ENCODE measurements at regions of chr2 and their contacts with region 1.

Region 1: DNA sequence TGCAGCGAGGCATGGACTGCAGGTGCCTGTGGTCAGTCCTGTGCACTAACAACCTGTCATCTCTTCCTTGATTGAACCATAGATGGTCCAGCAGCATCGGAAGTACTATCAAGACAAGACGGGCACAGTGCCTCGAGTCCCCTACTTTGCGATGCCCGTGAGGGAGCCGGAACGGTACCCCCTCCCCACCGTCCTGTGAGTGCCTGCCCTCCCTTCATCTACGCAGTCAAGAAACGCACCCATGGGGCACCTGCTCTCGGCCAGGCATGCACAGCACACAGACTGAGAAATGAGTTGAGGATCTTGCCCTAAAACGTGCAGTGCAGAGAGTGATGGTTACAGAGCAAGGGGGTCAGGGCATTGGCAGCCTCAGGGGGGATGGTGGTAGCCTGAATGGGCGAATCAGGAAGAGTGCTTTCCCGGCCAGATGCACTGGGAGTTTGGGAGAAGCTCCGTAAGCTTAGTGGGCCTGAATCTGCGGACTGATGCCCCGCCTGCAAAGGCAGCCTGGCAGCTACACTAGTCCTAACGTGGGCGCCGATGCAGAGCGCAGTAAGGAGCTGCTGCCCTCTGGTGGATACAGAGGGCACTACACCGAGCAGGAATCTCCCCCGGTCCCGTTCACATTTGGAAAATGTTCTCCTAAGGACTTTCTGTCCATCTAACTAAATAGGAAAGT is 63.6 kb downstream of the CIB4 start:
- DNase-seq: peak; percentile 32 to 76 (median 63)
- ATAC-seq: peak; percentile 92
- H3K4me3 ChIP-seq: no peak overlapping the region
- H3K4me3 Mint-ChIP-seq: no peak overlapping the region
- H3K27ac ChIP-seq: no peak overlapping the region
- H3K27ac Mint-ChIP-seq: no peak overlapping the region
- H3K4me1 ChIP-seq: no peaks in the 10 kb centered on the region
- H3K4me1 Mint-ChIP-seq: no peaks in the 10 kb centered on the region
- H3K27me3 ChIP-seq: no peaks in the 10 kb centered on the region
- H3K27me3 Mint-ChIP-seq: peaks cover 17% of the 10 kb centered on the region
- CTCF ChIP-seq: peak; percentile 95

Region 2: GRCh38 chr2:25602333-25602723 is 975.2 kb before region 1 on chr2:
- CTCF ChIA-PET with region 1: no interaction called
- POLR2A ChIA-PET with region 1: no interaction called
- intact Hi-C with region 1: no loop called
- DNase-seq: no peak
- ATAC-seq: no peak
- H3K4me3 ChIP-seq: no peak overlapping the region
- H3K4me3 Mint-ChIP-seq: no peak overlapping the region
- H3K27ac ChIP-seq: no peak overlapping the region
- H3K27ac Mint-ChIP-seq: no peak overlapping the region
- H3K4me1 ChIP-seq: no peaks in the 10 kb centered on the region
- H3K4me1 Mint-ChIP-seq: peaks cover 2% of the 10 kb centered on the region
- H3K27me3 ChIP-seq: no peaks in the 10 kb centered on the region
- H3K27me3 Mint-ChIP-seq: no peaks in the 10 kb centered on the region
- CTCF ChIP-seq: no peak

Region 3: DNA sequence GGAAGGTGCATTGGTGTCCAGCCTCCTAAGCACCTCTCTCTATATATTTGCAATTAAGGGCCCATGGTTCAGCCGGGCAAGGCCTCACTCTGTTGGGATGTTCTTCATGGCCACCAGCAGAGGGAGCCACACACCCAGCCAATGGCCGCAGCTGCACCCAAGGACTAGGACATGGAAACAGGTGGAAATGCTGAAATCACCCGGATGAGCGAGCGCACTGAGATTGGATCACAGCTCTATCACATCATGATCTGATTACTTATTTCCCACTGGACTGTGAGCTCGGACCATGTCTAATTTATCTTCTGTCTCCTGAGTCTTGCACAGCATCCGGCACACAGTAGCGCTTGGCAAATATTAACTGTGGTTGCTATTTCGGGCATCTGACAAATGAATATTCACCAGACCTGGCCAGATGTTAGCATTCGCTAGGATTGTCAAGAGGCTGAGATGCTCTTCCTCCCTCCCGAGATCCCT is 626.5 kb before region 1 on chr2:
- CTCF ChIA-PET with region 1: interaction called, 16 read pairs
- POLR2A ChIA-PET with region 1: no interaction called
- intact Hi-C with region 1: loop called in 1 of 2 experiments (anchors 1 kb)
- DNase-seq: peak; percentile 42 to 84 (median 67)
- ATAC-seq: peak; percentile 96
- H3K4me3 ChIP-seq: no peak overlapping the region
- H3K4me3 Mint-ChIP-seq: no peak overlapping the region
- H3K27ac ChIP-seq: no peak overlapping the region
- H3K27ac Mint-ChIP-seq: no peak overlapping the region
- H3K4me1 ChIP-seq: no peaks in the 10 kb centered on the region
- H3K4me1 Mint-ChIP-seq: peaks cover 2% of the 10 kb centered on the region
- H3K27me3 ChIP-seq: no peaks in the 10 kb centered on the region
- H3K27me3 Mint-ChIP-seq: no peaks in the 10 kb centered on the region
- CTCF ChIP-seq: peak; percentile 89

Region 4: DNA sequence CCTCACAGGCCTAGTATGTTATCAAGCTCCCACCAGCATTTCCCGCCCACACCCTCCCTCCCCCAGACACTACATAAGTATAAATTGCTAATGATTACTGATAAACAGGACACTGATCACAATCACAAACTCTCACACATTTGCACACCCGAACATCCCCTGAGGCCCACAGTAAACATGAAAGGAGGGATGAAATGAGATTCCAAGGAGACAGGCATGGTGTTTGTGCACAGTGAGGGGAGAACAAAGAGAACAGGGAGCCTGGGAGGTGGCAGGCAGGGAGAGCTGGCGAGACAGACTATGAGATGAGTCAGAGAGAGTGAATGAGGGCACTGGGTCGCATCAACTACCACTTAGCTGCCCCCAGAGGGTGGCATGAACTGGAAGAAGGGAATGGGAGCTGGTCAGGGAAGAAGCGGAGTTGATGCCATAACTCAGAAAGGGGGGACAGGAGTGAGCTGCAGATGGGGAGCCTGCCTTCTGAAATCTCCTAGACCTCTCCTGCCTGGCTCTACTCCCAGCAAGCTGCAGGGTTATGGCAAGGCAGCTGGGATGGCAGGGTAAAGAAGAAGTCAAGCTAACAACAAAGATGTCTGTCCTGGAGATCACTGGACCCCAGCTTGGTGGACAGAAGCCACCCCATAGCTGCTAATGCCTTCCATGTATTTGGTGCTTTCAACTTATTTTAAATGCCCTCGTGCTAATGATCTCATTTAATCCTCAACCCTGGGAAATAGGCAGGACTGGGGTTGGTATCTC is 600.4 kb before region 1 on chr2:
- CTCF ChIA-PET with region 1: no interaction called
- POLR2A ChIA-PET with region 1: no interaction called
- intact Hi-C with region 1: no loop called
- DNase-seq: no peak
- ATAC-seq: no peak
- H3K4me3 ChIP-seq: no peak overlapping the region
- H3K4me3 Mint-ChIP-seq: no peak overlapping the region
- H3K27ac ChIP-seq: no peak overlapping the region
- H3K27ac Mint-ChIP-seq: no peak overlapping the region
- H3K4me1 ChIP-seq: peaks cover 7% of the 10 kb centered on the region
- H3K4me1 Mint-ChIP-seq: peaks cover 20% of the 10 kb centered on the region
- H3K27me3 ChIP-seq: no peaks in the 10 kb centered on the region
- H3K27me3 Mint-ChIP-seq: no peaks in the 10 kb centered on the region
- CTCF ChIP-seq: no peak

Region 5: GRCh38 chr2:26088032-26088643 is 489.4 kb before region 1 on chr2:
- CTCF ChIA-PET with region 1: no interaction called
- POLR2A ChIA-PET with region 1: no interaction called
- intact Hi-C with region 1: loop called in 1 of 2 experiments (anchors 5 kb)
- DNase-seq: peak in 4 of 9 experiments; percentile 9 to 61 (median 32)
- ATAC-seq: peak; percentile 69
- H3K4me3 ChIP-seq: no peak overlapping the region
- H3K4me3 Mint-ChIP-seq: no peak overlapping the region
- H3K27ac ChIP-seq: no peak overlapping the region
- H3K27ac Mint-ChIP-seq: no peak overlapping the region
- H3K4me1 ChIP-seq: peaks cover 4% of the 10 kb centered on the region
- H3K4me1 Mint-ChIP-seq: peaks cover 61% of the 10 kb centered on the region
- H3K27me3 ChIP-seq: no peaks in the 10 kb centered on the region
- H3K27me3 Mint-ChIP-seq: no peaks in the 10 kb centered on the region
- CTCF ChIP-seq: peak; percentile 69

Region 6: DNA sequence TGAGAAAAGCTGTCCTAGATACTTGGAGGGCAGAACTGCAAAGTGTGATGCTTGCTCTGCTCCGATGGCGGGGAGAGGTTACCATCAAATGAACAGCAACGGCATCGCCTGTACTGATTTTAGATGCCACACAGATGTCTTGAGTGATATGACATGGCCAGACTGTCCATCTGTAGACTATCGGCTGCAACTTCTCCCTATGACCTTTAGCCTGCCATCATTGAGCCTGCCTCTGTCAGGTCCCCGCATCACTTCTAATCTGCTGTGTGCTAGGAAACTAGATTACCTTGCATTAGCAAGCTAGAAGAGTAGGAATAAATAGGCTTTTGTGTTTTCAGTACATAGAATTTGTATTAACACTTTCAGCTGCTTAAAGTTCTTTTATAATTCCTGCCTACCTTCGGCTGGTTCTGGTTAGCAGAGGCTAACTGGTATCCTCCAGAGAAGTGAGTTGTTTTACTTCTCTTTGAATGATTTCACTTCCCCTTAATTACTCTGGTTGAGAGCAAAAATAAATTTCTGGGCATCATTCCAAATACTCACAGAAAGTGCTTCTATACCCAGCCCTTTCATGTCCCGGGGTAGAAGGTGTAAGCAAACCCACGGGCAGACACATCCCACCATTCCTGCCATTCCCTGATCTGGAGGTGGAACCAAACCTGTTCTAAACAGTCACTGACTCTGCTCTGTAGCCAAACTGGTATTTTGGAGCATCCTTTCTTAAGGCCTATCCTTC is 380.7 kb before region 1 on chr2:
- CTCF ChIA-PET with region 1: no interaction called
- POLR2A ChIA-PET with region 1: no interaction called
- intact Hi-C with region 1: no loop called
- DNase-seq: no peak
- ATAC-seq: no peak
- H3K4me3 ChIP-seq: no peak overlapping the region
- H3K4me3 Mint-ChIP-seq: no peak overlapping the region
- H3K27ac ChIP-seq: no peak overlapping the region
- H3K27ac Mint-ChIP-seq: no peak overlapping the region
- H3K4me1 ChIP-seq: no peaks in the 10 kb centered on the region
- H3K4me1 Mint-ChIP-seq: no peaks in the 10 kb centered on the region
- H3K27me3 ChIP-seq: no peaks in the 10 kb centered on the region
- H3K27me3 Mint-ChIP-seq: no peaks in the 10 kb centered on the region
- CTCF ChIP-seq: no peak

Region 7: DNA sequence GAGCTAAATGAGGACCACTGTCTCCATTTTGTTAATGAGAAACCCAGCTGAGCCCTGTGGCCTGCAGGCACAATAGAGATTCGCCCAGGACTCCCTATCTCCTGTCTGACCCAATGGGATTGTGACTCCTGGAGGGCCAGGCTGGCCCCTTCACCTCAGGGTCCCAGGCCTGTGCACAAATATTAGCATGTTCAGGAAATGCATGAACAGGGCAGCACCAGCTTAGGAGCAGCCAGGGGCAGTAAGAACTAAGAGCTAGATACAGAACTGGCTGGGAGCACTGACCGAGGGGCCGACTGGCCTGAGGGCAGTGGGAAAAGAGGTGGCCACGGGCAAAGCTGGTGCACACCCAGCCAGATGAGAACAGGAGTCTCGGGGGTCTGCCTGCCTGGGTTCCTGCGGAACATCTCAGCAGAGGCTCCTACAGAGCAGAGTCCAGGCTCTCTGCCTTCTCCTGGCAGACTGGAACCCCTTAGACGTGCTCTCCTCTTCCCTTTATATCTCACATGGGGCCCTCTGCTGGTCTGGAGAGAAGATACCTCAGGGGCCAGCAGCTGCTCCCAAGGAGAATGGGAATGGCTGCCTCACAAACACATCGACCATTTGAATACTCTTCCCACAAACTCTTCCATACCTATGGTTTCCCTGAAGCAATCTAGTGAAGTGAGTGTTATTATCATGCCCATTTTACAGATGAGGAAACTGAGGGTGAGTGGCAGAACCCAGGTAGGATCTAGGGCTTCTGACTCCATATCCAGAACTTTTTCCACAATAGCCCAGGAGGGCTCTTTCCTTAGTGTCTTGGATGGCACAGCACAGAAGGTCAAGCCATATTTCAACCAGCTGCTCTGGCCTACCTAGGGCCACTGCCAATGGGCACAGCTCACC is 22.1 kb before region 1 on chr2:
- CTCF ChIA-PET with region 1: interaction called, 12 read pairs
- POLR2A ChIA-PET with region 1: no interaction called
- intact Hi-C with region 1: no loop called
- DNase-seq: no peak
- ATAC-seq: no peak
- H3K4me3 ChIP-seq: no peak overlapping the region
- H3K4me3 Mint-ChIP-seq: no peak overlapping the region
- H3K27ac ChIP-seq: no peak overlapping the region
- H3K27ac Mint-ChIP-seq: no peak overlapping the region
- H3K4me1 ChIP-seq: no peaks in the 10 kb centered on the region
- H3K4me1 Mint-ChIP-seq: no peaks in the 10 kb centered on the region
- H3K27me3 ChIP-seq: peaks cover 0 to 6% of the 10 kb centered on the region in 2 experiments
- H3K27me3 Mint-ChIP-seq: peaks cover 47% of the 10 kb centered on the region
- CTCF ChIP-seq: no peak

Region 8: DNA sequence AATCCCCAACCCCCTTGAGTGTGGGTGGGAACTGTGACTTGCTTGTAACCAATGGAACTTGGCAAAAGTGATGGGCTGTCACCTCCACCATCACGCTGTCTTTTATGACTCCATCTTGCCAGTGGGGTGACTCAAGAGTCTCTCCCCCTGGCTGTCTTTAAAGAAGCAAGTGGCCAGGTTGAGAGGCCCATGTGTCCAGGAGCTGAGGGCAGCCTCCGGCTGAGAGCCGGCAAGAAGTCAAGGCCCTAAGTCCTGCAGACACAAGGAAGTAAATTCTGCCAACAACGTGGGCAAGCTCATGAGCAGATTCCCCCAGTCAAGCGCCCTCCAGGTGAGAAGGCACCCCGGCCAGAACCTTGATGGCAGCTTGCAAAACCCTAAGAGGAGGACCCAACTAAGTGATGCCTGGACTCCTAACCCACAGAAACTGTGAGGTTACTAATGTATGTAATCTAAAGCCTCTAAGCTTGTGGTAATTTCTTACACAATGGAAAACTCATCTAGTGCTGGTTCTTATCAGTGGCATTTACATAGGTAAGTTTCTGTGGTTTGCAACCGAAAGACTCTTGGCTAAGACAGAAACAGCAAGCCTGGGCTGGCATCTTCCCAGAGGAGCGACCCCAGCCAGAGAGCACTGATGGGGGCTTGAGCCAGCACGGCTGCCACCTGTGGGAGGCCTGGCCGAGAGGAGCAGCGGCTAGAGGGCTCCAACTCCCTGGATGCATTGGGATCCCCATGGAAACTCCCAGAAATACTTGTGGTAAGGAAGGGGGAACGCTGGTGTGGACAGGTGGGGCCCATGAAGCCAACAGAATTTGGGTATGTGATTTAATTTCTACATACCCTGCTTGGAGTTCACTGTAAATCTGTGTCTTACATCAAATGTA is 14.3 kb after region 1 on chr2:
- CTCF ChIA-PET with region 1: interaction called, 20 read pairs
- POLR2A ChIA-PET with region 1: no interaction called
- intact Hi-C with region 1: no loop called
- DNase-seq: no peak
- ATAC-seq: no peak
- H3K4me3 ChIP-seq: no peak overlapping the region
- H3K4me3 Mint-ChIP-seq: no peak overlapping the region
- H3K27ac ChIP-seq: no peak overlapping the region
- H3K27ac Mint-ChIP-seq: no peak overlapping the region
- H3K4me1 ChIP-seq: no peaks in the 10 kb centered on the region
- H3K4me1 Mint-ChIP-seq: peaks cover 5% of the 10 kb centered on the region
- H3K27me3 ChIP-seq: no peaks in the 10 kb centered on the region
- H3K27me3 Mint-ChIP-seq: peaks cover 16% of the 10 kb centered on the region
- CTCF ChIP-seq: no peak

Region 9: GRCh38 chr2:27689424-27689823 is 1111.9 kb after region 1 on chr2:
- CTCF ChIA-PET with region 1: no interaction called
- POLR2A ChIA-PET with region 1: no interaction called
- intact Hi-C with region 1: no loop called
- DNase-seq: no peak
- ATAC-seq: no peak
- H3K4me3 ChIP-seq: no peak overlapping the region
- H3K4me3 Mint-ChIP-seq: no peak overlapping the region
- H3K27ac ChIP-seq: no peak overlapping the region
- H3K27ac Mint-ChIP-seq: no peak overlapping the region
- H3K4me1 ChIP-seq: peaks cover 3% of the 10 kb centered on the region
- H3K4me1 Mint-ChIP-seq: peaks cover 14% of the 10 kb centered on the region
- H3K27me3 ChIP-seq: no peaks in the 10 kb centered on the region
- H3K27me3 Mint-ChIP-seq: no peaks in the 10 kb centered on the region
- CTCF ChIP-seq: no peak

Measured in CD8-positive, alpha-beta T cell (primary cell).